HEK293 (cell line): ENCODE measurements at regions of chr2 and their contacts with region 1.

Region 1: GRCh38 chr2:219294356-219295351 is 14.5 kb downstream of the PTPRN start:
- H3K4me3 ChIP-seq: peak overlapping the region; percentile 56
- H3K27ac ChIP-seq: peak overlapping the region; percentile 45; the same call in 1 of the 2 replicates
- H3K4me1 ChIP-seq: no peaks in the 10 kb centered on the region; the same call in 1 of the 2 replicates
- CTCF ChIP-seq: peak; percentile 88

Region 2: DNA sequence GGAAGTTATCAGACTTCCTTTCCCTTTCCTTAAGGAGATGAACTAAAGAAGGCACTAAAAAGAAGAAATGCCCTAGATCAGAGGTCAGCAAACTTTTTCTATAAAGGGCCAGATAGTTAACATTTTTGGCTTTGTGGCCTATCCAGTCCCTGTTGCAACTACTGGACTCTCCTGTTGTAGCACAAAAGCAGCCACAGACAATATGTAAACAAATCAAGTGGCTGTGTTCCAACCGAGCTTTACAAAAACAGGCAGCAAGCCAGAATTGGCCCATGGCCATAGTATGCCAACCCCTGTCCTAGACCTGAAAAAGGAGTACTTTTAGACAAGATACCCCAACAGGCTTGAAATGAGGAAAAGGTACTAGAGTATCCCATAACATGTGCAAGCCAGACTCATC is 145.0 kb before region 1 on chr2:
- CTCF ChIA-PET with region 1: interaction called, 11 read pairs
- POLR2A ChIA-PET with region 1: no interaction called
- H3K4me3 ChIP-seq: no peak overlapping the region
- H3K27ac ChIP-seq: no peak overlapping the region
- H3K4me1 ChIP-seq: peaks cover 6% of the 10 kb centered on the region; the same call in 1 of the 2 replicates
- CTCF ChIP-seq: no peak

Region 3: GRCh38 chr2:219218732-219219701 is 75.6 kb before region 1 on chr2 and contains the start of gene ABCB6:
- CTCF ChIA-PET with region 1: interaction called, 65 read pairs
- POLR2A ChIA-PET with region 1: interaction called, 3 read pairs
- H3K4me3 ChIP-seq: peak within 1 kb of the TSS; percentile 27
- H3K27ac ChIP-seq: peak within 1 kb of the TSS; percentile 80
- H3K4me1 ChIP-seq: no peaks in the 10 kb centered on the region
- CTCF ChIP-seq: no peak

Region 4: DNA sequence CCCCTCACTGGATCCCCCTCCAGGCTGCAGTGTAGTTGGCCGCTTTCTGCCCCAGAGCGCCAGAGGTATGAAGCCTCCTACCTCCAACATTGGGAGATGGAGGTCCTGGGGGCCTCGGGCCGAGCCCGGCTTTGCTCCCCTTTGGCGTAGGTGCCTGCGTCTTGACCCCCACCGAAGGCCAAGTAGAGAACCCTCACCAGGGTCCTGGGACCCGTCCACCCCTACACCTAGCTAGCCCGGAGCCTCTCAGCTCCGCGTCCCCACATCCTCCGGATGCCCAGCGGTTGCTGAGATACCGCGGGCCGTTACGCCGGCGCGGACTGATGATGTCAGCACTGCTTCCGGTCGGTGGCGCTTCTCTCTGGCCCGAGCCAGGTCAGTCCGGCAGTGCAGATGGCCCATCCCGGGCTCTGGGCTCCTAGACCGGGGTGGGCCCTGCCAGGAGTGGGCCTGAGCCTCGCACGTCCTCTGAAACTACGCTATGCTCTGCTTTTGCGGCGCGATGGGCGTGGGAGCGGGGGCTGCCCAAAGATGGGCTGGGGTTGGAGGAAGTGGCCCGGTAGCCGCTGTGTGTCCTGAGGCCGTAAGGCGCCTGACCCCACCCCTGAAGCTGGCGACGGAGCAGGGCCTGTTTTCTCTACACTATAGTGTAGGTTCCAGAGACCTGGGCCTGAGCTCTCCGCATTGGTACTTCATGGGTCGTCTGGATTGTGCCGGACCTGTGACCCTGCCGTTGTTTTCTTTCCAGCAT is 49.3 kb before region 1 on chr2 and contains the starts of genes GLB1L and STK16:
- CTCF ChIA-PET with region 1: interaction called, 39 read pairs
- POLR2A ChIA-PET with region 1: interaction called, 7 read pairs
- H3K4me3 ChIP-seq: peak within 1 kb of the TSS; percentile 94
- H3K27ac ChIP-seq: peak within 1 kb of the TSS; percentile 85
- H3K4me1 ChIP-seq: peaks cover 10% of the 10 kb centered on the region
- CTCF ChIP-seq: peak; percentile 32; the same call in 1 of the 2 replicates

Region 5: DNA sequence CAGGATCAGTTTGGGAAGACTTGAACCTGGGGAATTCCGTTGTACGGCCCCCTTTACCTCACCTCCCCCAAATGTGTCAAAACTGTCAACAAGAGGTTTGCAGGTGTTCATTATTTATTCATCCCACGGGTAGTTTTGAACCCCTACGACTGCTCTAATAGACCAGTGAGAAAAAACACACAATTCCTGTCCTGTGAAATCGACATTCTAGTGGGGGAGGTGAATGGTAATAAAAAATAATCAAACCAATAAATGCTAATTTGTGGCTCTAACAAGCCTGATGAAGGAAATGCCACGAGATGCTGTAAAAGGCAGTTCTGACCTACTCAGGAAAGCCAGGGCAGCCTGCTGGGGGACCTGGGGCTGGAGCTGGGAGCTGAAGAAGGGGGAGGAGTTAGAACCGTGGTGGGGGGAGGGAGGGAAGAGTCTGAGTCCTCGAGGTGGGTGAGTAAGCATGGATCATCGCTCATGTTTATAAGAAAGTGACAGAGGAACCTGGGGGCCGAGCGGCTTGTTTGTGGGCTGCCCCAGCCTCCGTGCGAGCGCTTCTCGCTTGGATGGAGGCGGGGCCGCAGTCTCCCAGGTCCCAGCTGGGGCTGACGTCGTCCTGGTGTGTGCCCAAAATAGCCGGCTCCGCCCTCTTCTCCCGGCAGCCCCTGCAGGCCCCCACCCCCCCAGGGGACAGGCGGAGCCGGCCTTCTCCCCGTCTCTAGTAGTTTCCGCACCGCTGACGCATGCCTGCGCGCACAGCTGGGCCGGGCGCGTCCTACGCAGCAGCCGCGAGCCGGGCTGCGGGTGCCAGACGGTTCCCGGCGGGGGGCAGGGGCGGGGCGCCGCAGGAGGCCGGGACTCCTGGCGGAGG is 15.8 kb before region 1 on chr2 and contains the start of gene DNAJB2:
- CTCF ChIA-PET with region 1: interaction called, 297 read pairs
- POLR2A ChIA-PET with region 1: interaction called, 18 read pairs
- H3K4me3 ChIP-seq: peak within 1 kb of the TSS; percentile 54
- H3K27ac ChIP-seq: peak within 1 kb of the TSS; percentile 67
- H3K4me1 ChIP-seq: peaks cover 6% of the 10 kb centered on the region
- CTCF ChIP-seq: no peak